ENCODE measurements at regions of chr20 and their contacts with region 1.

Region 1: DNA sequence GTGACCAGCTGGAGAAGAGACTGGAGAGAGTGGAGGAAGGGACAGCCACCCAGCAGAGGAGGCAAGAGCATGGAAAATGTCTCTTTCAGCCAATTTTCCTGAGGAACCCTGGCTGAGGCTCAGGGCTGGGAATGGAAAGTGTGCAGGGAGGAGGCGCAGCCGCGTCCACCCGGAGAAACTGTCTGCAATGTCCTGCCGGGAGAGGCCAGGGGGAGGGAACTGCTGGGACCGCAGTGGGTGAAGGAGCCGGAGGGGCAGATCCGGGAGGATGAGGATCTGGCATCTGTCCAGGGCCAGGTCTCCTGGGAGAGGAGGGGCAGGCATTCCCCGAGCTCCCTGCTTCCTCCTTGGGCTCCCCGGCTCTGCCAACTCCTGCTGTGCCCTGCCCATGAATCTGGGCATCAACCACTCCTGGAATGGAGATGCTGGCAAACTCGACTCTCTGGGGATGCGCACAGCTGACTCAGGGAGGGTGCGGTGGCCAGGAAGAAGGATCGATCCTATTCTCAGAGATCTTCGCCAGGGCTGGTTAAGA is 17.4 kb upstream of the HM13 start:
- DNase-seq: no peak
- H3K4me3 Mint-ChIP-seq: no peak overlapping the region
- H3K27ac Mint-ChIP-seq: no peak overlapping the region
- H3K4me1 Mint-ChIP-seq: no peaks in the 10 kb centered on the region
- H3K27me3 Mint-ChIP-seq: peaks cover 16% of the 10 kb centered on the region

Region 2: GRCh38 chr20:31392836-31393235 is 104.0 kb before region 1 on chr20:
- CTCF ChIA-PET with region 1: no interaction called
- POLR2A ChIA-PET with region 1: no interaction called
- DNase-seq: no peak
- H3K4me3 Mint-ChIP-seq: no peak overlapping the region
- H3K27ac Mint-ChIP-seq: no peak overlapping the region
- H3K4me1 Mint-ChIP-seq: no peaks in the 10 kb centered on the region
- H3K27me3 Mint-ChIP-seq: peaks cover 1% of the 10 kb centered on the region

Region 3: GRCh38 chr20:31454365-31454764 is 42.5 kb before region 1 on chr20:
- CTCF ChIA-PET with region 1: interaction called, 92 read pairs
- POLR2A ChIA-PET with region 1: no interaction called
- DNase-seq: no peak
- H3K4me3 Mint-ChIP-seq: no peak overlapping the region
- H3K27ac Mint-ChIP-seq: no peak overlapping the region
- H3K4me1 Mint-ChIP-seq: no peaks in the 10 kb centered on the region
- H3K27me3 Mint-ChIP-seq: peaks cover 7% of the 10 kb centered on the region

Region 4: GRCh38 chr20:31485450-31486339 is 11.1 kb before region 1 on chr20:
- CTCF ChIA-PET with region 1: interaction called, 40 read pairs
- POLR2A ChIA-PET with region 1: no interaction called
- DNase-seq: no peak
- H3K4me3 Mint-ChIP-seq: no peak overlapping the region
- H3K27ac Mint-ChIP-seq: no peak overlapping the region
- H3K4me1 Mint-ChIP-seq: no peaks in the 10 kb centered on the region
- H3K27me3 Mint-ChIP-seq: peaks cover 27% of the 10 kb centered on the region

Region 5: GRCh38 chr20:31514159-31515071 is 17.6 kb after region 1 on chr20 and contains the start of gene HM13:
- CTCF ChIA-PET with region 1: interaction called, 25 read pairs
- POLR2A ChIA-PET with region 1: no interaction called
- DNase-seq: peak; percentile 89
- H3K4me3 Mint-ChIP-seq: no peak within 1 kb of the TSS
- H3K27ac Mint-ChIP-seq: peak within 1 kb of the TSS; percentile 5
- H3K4me1 Mint-ChIP-seq: peaks cover 9% of the 10 kb centered on the region
- H3K27me3 Mint-ChIP-seq: no peaks in the 10 kb centered on the region
- total RNA-seq, gene HM13: 162 to 165 TPM